PC-3 (cell line): ENCODE measurements at regions of chr2 and their contacts with region 1.

Region 1: DNA sequence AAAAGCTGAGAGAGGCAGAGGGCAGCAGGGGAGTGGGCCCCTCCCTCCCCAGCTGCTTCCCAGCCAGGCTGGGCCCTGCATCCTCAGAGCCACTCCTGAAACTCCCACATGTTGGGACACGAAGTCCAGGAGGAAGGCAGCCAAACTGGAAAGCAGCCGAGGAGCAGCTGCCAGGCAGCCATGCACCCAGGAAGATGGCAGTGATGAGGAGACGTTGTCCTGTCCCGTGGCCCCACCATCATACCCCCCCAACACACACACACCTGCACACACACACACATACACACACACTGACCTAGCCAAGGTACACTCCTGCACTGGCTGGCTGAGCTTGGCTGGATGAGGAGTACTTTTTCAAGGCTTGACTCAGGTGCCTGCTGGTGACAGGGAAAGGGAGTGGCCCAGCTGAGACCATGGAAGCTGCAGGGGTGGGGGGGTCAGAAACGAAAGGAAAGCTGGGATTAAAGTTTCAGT is 106.0 kb downstream of the CYP26B1 start:
- DNase-seq: no peak
- ATAC-seq: no peak
- H3K4me3 ChIP-seq: no peak overlapping the region
- H3K27ac ChIP-seq: no peak overlapping the region
- H3K4me1 ChIP-seq: peaks cover 11% of the 10 kb centered on the region; the same call in 1 of the 2 replicates
- H3K27me3 ChIP-seq: peaks cover 7% of the 10 kb centered on the region; the same call in 1 of the 2 replicates
- CTCF ChIP-seq: no peak

Region 2: DNA sequence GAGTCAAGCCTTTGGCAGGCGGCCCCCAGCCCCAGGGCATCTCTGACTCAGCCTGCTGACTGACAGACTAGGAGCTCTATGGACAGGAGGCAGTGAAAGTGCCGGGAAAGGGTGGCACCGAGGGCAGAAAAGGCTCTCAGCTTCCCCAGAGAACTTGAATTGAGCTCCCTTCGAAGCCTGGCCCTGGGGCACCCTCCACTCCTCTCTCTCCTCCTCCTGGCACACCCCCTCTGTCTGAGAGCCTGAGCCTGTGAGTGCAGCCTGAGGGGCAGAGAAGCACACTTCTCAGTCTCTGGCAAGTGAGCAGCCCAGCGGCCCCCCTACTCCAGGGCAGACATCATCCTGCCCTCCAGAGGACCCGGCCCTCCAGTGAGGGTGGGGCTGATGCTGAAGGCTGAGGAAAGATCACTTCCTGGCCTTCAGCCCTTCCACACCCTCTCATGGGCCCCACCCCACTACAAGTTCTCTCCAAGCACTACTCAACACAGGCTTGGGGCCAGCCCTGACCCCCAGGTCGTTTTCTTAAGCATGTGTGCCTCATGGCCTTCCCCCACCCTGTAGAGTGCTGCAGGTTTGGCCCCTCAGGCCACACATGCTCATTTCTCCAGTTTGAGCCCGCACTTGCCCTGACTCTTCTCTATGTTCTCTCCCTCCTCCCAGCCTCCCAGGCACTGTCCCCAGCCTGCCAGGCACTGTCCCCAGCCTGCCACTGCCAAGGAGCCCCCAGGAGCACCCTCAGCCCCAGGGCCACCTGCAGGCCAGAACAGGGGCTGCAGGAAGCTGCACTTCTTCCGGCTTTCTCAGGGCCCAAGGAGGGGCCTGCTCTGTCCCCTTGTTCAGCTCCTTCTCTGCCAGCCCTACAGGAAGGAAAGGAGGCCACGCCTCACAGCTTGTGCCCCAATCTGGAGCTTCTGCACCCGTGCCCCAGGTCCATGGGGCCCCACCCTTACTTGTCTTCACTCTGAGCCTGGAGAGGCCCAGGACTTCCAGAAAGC is 74.2 kb after region 1 on chr2:
- CTCF ChIA-PET with region 1: interaction called, 14 read pairs
- POLR2A ChIA-PET with region 1: no interaction called
- intact Hi-C with region 1: no loop called
- DNase-seq: peak; percentile 99
- ATAC-seq: peak; percentile 85
- H3K4me3 ChIP-seq: peak overlapping the region; percentile 47
- H3K27ac ChIP-seq: peak overlapping the region; percentile 96
- H3K4me1 ChIP-seq: peaks cover 41% of the 10 kb centered on the region
- H3K27me3 ChIP-seq: no peaks in the 10 kb centered on the region
- CTCF ChIP-seq: peak; percentile 69

Region 3: GRCh38 chr2:73293534-73294171 is 1252.0 kb after region 1 on chr2 and contains the start of gene EGR4:
- CTCF ChIA-PET with region 1: no interaction called
- POLR2A ChIA-PET with region 1: no interaction called
- intact Hi-C with region 1: no loop called
- DNase-seq: peak; percentile 52
- ATAC-seq: peak; percentile 64
- H3K4me3 ChIP-seq: peak within 1 kb of the TSS; percentile 59
- H3K27ac ChIP-seq: no peak within 1 kb of the TSS
- H3K4me1 ChIP-seq: no peaks in the 10 kb centered on the region
- H3K27me3 ChIP-seq: peaks cover 84% of the 10 kb centered on the region
- CTCF ChIP-seq: no peak
- total RNA-seq, gene EGR4: not detected in 2 replicates